MCF 10A (cell line): ENCODE measurements at regions of chr13 and their contacts with region 1.

Region 1: DNA sequence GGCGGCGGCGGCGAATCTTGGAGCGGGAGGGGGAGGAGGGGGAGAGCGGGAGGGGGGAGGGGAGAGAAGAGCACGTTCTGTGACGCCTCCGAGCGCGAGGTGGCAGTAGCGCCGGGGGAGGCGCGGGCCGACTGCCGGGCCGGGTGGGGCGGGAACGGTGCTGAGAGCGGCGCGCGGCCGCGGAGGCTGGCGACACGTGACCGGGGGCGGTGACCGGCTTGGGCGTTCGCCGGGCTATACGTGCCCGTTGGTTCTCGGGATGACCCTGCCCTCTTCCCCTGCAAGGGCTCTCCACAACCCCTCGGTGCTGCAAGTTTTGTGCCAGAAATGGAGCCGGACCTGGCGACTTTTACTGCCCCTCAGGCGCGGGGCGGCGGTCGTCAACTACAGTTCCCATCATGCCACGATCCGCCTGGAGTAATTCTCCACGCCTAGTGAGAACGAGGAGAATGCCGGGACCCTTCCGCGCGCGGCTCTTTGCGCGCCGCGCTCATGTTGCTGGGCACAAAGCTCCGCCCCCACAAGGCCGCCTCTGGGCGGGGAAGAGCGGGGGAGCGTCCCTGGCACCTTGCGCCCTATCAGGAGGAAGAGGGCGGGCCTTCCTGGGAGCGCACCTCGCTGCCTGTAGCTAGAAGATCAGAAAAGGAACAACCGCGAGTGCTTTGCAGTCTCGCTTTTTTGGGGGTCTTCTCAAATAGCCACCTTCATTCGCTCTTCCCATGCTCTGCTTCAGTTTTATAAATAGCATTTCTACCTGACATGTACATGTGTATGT is at the start of gene KPNA3:
- DNase-seq: peak; percentile 96
- H3K4me3 Mint-ChIP-seq: peak within 1 kb of the TSS; percentile 88
- H3K27ac Mint-ChIP-seq: peak within 1 kb of the TSS; percentile 90
- H3K4me1 Mint-ChIP-seq: peaks cover 20% of the 10 kb centered on the region
- H3K27me3 Mint-ChIP-seq: no peaks in the 10 kb centered on the region
- CTCF ChIP-seq: no peak
- total RNA-seq, gene KPNA3: 40.6 and 41.3 TPM in 2 replicates

Region 2: GRCh38 chr13:49669735-49670309 is 122.9 kb before region 1 on chr13:
- CTCF ChIA-PET with region 1: interaction called, 21 read pairs
- POLR2A ChIA-PET with region 1: interaction called, 9 read pairs
- intact Hi-C with region 1: loop called (anchors 1 kb)
- DNase-seq: peak; percentile 73
- H3K4me3 Mint-ChIP-seq: no peak overlapping the region
- H3K27ac Mint-ChIP-seq: no peak overlapping the region
- H3K4me1 Mint-ChIP-seq: peaks cover 30% of the 10 kb centered on the region
- H3K27me3 Mint-ChIP-seq: no peaks in the 10 kb centered on the region
- CTCF ChIP-seq: peak; percentile 73

Region 3: GRCh38 chr13:49731766-49732165 is 61.0 kb before region 1 on chr13:
- CTCF ChIA-PET with region 1: no interaction called
- POLR2A ChIA-PET with region 1: interaction called, 4 read pairs
- intact Hi-C with region 1: loop called (anchors 10 kb)
- DNase-seq: peak; percentile 43
- H3K4me3 Mint-ChIP-seq: no peak overlapping the region
- H3K27ac Mint-ChIP-seq: no peak overlapping the region
- H3K4me1 Mint-ChIP-seq: no peaks in the 10 kb centered on the region
- H3K27me3 Mint-ChIP-seq: no peaks in the 10 kb centered on the region
- CTCF ChIP-seq: no peak

Region 4: DNA sequence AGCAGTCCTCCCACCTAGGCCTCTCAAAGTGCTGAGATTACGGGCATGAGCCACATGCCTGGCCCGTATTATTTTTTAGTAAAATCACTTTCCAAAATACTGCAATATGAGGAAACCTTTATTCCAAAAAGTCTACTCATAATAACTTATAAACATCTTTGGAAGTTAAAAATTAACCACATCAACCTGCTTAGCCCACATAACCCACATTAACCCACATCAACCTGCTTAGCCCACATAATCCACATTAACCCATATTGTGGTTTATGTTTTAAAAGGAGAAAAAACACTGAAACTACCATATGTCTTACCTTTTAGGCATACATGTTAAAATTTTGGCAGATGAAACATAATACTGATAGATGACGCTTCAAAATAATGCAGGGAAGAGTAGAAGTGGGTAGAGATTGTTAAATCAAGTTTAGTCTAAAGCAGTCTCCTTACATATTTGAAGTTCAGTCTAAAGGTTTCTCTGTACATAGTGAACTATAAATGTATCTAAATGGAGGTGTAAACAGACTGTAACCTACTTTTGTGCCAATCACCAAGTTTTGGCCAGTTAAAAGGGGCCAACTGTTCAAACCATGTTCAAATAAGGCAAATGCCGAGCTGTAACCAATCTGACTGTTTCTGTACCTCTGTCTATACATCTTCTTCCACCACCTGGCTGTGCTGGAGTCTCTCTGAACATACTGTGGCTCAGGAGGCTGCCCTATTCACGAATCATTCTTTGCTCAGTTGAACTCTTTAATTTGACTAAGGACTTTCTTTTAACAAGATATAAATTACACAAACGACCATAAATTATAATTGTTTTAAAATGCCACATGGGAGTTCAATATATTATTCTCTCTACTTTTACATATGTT is 14.8 kb before region 1 on chr13:
- CTCF ChIA-PET with region 1: interaction called, 17 read pairs
- POLR2A ChIA-PET with region 1: interaction called, 13 read pairs
- intact Hi-C with region 1: no loop called
- DNase-seq: no peak
- H3K4me3 Mint-ChIP-seq: no peak overlapping the region
- H3K27ac Mint-ChIP-seq: no peak overlapping the region
- H3K4me1 Mint-ChIP-seq: peaks cover 20% of the 10 kb centered on the region
- H3K27me3 Mint-ChIP-seq: no peaks in the 10 kb centered on the region
- CTCF ChIP-seq: no peak

Region 5: DNA sequence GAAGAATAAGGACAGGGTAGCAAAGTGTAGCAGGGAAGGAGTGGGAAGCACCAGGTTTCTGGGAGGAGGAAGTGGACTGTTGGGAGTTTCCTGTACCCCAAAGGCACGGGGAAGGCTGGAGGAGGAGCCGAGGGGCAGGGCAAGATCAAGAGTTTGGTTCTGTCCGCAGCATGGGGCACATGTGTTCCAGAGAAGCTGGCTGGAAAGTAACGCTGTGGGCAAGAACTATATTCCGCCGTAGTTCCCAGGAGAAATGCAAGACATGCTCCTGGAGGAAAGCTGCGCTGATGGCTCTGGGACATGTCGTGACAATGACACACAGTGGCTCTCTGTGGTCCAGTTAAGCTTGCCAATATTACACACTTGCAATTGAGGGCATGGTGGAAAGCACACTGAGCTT is 51.4 kb after region 1 on chr13:
- CTCF ChIA-PET with region 1: interaction called, 6 read pairs
- POLR2A ChIA-PET with region 1: interaction called, 9 read pairs
- intact Hi-C with region 1: loop called (anchors 2 kb)
- DNase-seq: no peak
- H3K4me3 Mint-ChIP-seq: no peak overlapping the region
- H3K27ac Mint-ChIP-seq: no peak overlapping the region
- H3K4me1 Mint-ChIP-seq: peaks cover 8% of the 10 kb centered on the region
- H3K27me3 Mint-ChIP-seq: no peaks in the 10 kb centered on the region
- CTCF ChIP-seq: no peak

Region 6: GRCh38 chr13:49936085-49936940 is 143.6 kb after region 1 on chr13 and contains the start of gene SPRYD7:
- CTCF ChIA-PET with region 1: interaction called, 9 read pairs
- POLR2A ChIA-PET with region 1: interaction called, 17 read pairs
- intact Hi-C with region 1: loop called (anchors 5 kb)
- DNase-seq: peak; percentile 97
- H3K4me3 Mint-ChIP-seq: peak within 1 kb of the TSS; percentile 88
- H3K27ac Mint-ChIP-seq: peak within 1 kb of the TSS; percentile 72
- H3K4me1 Mint-ChIP-seq: peaks cover 7% of the 10 kb centered on the region
- H3K27me3 Mint-ChIP-seq: no peaks in the 10 kb centered on the region
- CTCF ChIP-seq: peak; percentile 88
- total RNA-seq, gene SPRYD7: 15.1 and 19.5 TPM in 2 replicates